CD4-positive, alpha-beta T cell (primary cell): ENCODE measurements at regions of chrX and their contacts with region 1.

Region 1: DNA sequence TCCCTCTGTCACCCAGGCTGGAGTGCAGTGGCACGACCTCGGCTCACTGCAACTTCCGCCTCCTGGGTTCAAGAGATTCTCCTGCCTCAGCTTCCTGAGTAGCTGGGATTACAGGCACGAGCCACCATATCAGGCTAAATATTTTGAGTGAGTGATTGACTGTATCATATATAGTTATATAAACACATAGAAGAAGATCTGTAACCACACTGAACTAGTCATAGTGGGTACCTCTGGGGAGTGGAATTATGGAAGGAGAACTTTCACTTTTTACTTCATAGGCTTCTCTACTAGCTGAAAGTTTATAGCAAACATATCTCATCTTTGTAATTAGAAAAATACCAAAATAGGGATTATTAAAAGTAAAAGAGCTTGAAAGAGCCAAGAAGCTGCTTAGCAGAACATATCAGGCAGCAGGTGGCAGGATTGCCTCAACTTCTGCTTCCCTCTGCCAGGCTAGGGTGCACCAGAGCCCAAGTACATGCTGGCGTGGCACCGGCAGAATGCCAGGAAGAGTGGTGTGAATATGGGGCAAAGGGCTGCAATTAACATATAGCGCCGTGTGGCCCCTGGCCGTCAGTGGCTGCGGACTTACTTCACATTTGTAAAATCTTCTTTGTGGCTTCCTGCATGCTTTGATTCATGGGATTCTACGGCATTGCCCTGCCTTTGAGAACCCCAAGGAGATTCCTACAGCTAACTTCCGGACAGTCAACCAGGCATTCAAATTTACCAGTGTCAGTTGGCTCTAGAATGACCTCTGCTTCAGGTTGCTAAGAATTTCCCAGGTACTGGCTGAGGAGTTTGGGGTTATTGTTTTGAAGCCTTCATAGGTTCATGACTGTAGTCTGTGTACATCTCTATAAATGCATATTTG is 39.4 kb upstream of the CD40LG start:
- DNase-seq: peak; percentile 38 to 86 (median 60)
- ATAC-seq: peak; percentile 92
- H3K4me3 ChIP-seq: peak overlapping the region; percentile 10
- H3K4me3 Mint-ChIP-seq: peak overlapping the region; percentile 73
- H3K27ac ChIP-seq: peak overlapping the region in 1 of 2 donors; percentile 2
- H3K27ac Mint-ChIP-seq: peak overlapping the region; percentile 91
- H3K4me1 ChIP-seq: peaks cover 24% of the 10 kb centered on the region
- H3K4me1 Mint-ChIP-seq: peaks cover 47% of the 10 kb centered on the region
- H3K27me3 ChIP-seq: no peaks in the 10 kb centered on the region
- H3K27me3 Mint-ChIP-seq: no peaks in the 10 kb centered on the region
- CTCF ChIP-seq: peak; percentile 63

Region 2: DNA sequence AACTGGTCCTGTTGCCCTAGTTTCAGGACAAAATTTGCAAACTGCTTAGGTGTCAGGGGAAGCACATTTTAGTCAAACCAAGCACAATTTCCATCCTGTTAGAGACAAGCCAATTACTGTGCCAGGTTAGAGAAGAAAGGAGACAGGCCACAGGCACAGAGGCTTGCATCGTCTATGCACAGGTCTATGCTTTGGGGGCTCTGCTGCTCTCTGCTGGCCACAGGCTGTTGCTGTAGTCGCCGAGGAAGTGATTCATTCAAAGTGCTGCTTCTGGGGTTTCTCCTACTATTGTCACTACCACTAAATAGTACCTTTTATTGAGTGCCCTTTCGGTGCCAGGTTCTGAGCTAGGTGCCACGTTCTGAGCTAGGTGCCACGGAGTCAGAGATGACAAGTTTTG is 31.0 kb before region 1 on chrX:
- CTCF ChIA-PET with region 1: interaction called, 3 read pairs
- POLR2A ChIA-PET with region 1: interaction called, 17 read pairs
- intact Hi-C with region 1: loop called in 1 of 2 experiments (anchors 5 kb)
- DNase-seq: peak; percentile 45 to 85 (median 62)
- ATAC-seq: peak; percentile 100
- H3K4me3 ChIP-seq: no peak overlapping the region
- H3K4me3 Mint-ChIP-seq: no peak overlapping the region
- H3K27ac ChIP-seq: no peak overlapping the region
- H3K27ac Mint-ChIP-seq: peak overlapping the region; percentile 61
- H3K4me1 ChIP-seq: peaks cover 12% of the 10 kb centered on the region
- H3K4me1 Mint-ChIP-seq: peaks cover 13% of the 10 kb centered on the region
- H3K27me3 ChIP-seq: no peaks in the 10 kb centered on the region
- H3K27me3 Mint-ChIP-seq: no peaks in the 10 kb centered on the region
- CTCF ChIP-seq: peak; percentile 63

Region 3: GRCh38 chrX:136646602-136647239 is 38.2 kb after region 1 on chrX:
- CTCF ChIA-PET with region 1: interaction called, 4 read pairs
- POLR2A ChIA-PET with region 1: interaction called, 29 read pairs
- intact Hi-C with region 1: loop called (anchors 2 to 5 kb)
- DNase-seq: peak in 12 of 14 experiments; percentile 14 to 78 (median 44)
- ATAC-seq: peak; percentile 81
- H3K4me3 ChIP-seq: no peak overlapping the region
- H3K4me3 Mint-ChIP-seq: peak overlapping the region; percentile 99
- H3K27ac ChIP-seq: peak overlapping the region; percentile 39 to 45
- H3K27ac Mint-ChIP-seq: peak overlapping the region; percentile 92
- H3K4me1 ChIP-seq: peaks cover 26% of the 10 kb centered on the region
- H3K4me1 Mint-ChIP-seq: peaks cover 54% of the 10 kb centered on the region
- H3K27me3 ChIP-seq: no peaks in the 10 kb centered on the region
- H3K27me3 Mint-ChIP-seq: no peaks in the 10 kb centered on the region
- CTCF ChIP-seq: no peak

Region 4: DNA sequence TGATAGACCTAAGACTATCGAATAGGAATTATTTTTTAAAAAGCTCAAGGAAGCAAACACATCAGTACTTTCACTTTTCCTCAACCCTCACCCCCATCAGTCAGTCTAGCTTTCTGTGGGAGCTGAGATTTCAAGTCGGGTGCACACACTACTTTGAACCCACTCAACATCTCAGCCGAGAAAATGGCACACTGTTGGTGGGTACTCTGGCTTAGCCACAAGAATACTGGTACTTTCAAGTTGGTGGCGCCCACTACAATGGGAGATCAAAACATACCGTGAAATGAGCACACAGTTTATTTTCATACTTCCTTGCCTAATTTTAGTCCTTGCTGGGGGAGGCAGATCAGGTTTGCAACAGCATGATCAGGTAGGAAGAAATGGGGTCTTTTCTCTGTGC is 49.6 kb after region 1 on chrX:
- CTCF ChIA-PET with region 1: no interaction called
- POLR2A ChIA-PET with region 1: interaction called, 32 read pairs
- intact Hi-C with region 1: loop called in 1 of 2 experiments (anchors 5 kb)
- DNase-seq: peak in 5 of 14 experiments; percentile 16 to 50 (median 45)
- ATAC-seq: peak; percentile 10
- H3K4me3 ChIP-seq: peak overlapping the region; percentile 36
- H3K4me3 Mint-ChIP-seq: peak overlapping the region; percentile 99
- H3K27ac ChIP-seq: peak overlapping the region; percentile 74 to 75
- H3K27ac Mint-ChIP-seq: peak overlapping the region; percentile 92
- H3K4me1 ChIP-seq: peaks cover 76% of the 10 kb centered on the region
- H3K4me1 Mint-ChIP-seq: peaks cover 98% of the 10 kb centered on the region
- H3K27me3 ChIP-seq: no peaks in the 10 kb centered on the region
- H3K27me3 Mint-ChIP-seq: no peaks in the 10 kb centered on the region
- CTCF ChIP-seq: no peak

Region 5: GRCh38 chrX:136694431-136695087 is 86.0 kb after region 1 on chrX:
- CTCF ChIA-PET with region 1: interaction called, 18 read pairs
- POLR2A ChIA-PET with region 1: interaction called, 27 read pairs
- intact Hi-C with region 1: loop called (anchors 1 kb)
- DNase-seq: peak in 10 of 14 experiments; percentile 6 to 83 (median 23)
- ATAC-seq: peak; percentile 70
- H3K4me3 ChIP-seq: peak overlapping the region; percentile 33
- H3K4me3 Mint-ChIP-seq: peak overlapping the region; percentile 71
- H3K27ac ChIP-seq: peak overlapping the region; percentile 81 to 87
- H3K27ac Mint-ChIP-seq: peak overlapping the region; percentile 95
- H3K4me1 ChIP-seq: peaks cover 50% of the 10 kb centered on the region
- H3K4me1 Mint-ChIP-seq: peaks cover 79% of the 10 kb centered on the region
- H3K27me3 ChIP-seq: no peaks in the 10 kb centered on the region
- H3K27me3 Mint-ChIP-seq: no peaks in the 10 kb centered on the region
- CTCF ChIP-seq: peak; percentile 66

Region 6: DNA sequence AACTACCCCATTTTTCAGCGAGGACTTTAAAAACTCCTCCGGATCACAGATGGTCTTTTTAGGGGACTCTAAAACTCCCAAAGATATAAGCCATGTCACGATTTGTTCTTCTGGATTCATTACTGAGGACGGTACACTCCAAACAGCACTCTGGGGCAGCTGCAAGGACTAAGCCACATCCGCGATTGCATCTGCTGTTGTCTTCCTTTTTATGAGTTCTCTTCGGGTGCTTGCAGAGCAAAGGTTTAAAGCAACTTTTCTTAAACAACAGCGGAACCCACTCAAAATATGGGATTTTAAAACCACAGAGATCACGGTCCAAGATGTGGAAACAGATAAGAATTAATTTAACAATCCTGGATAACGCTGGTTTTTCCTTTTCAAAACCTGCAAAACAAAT is 172.2 kb after region 1 on chrX and contains the start of gene ARHGEF6:
- CTCF ChIA-PET with region 1: no interaction called
- POLR2A ChIA-PET with region 1: no interaction called
- intact Hi-C with region 1: no loop called
- DNase-seq: peak in 12 of 14 experiments; percentile 9 to 66 (median 38)
- ATAC-seq: peak; percentile 60
- H3K4me3 ChIP-seq: peak within 1 kb of the TSS; percentile 79
- H3K4me3 Mint-ChIP-seq: peak within 1 kb of the TSS; percentile 98
- H3K27ac ChIP-seq: peak within 1 kb of the TSS; percentile 65 to 84
- H3K27ac Mint-ChIP-seq: peak within 1 kb of the TSS; percentile 95
- H3K4me1 ChIP-seq: peaks cover 29% of the 10 kb centered on the region
- H3K4me1 Mint-ChIP-seq: peaks cover 75% of the 10 kb centered on the region
- H3K27me3 ChIP-seq: no peaks in the 10 kb centered on the region
- H3K27me3 Mint-ChIP-seq: no peaks in the 10 kb centered on the region
- CTCF ChIP-seq: no peak
- total RNA-seq, gene ARHGEF6: 43.3 to 45.3 TPM

Region 7: GRCh38 chrX:136920001-136920400 is 311.5 kb after region 1 on chrX:
- CTCF ChIA-PET with region 1: no interaction called
- POLR2A ChIA-PET with region 1: no interaction called
- intact Hi-C with region 1: loop called in 1 of 2 experiments (anchors 1 kb)
- DNase-seq: no peak
- ATAC-seq: no peak
- H3K4me3 ChIP-seq: no peak overlapping the region
- H3K4me3 Mint-ChIP-seq: no peak overlapping the region
- H3K27ac ChIP-seq: no peak overlapping the region
- H3K27ac Mint-ChIP-seq: no peak overlapping the region
- H3K4me1 ChIP-seq: peaks cover 2% of the 10 kb centered on the region
- H3K4me1 Mint-ChIP-seq: peaks cover 3% of the 10 kb centered on the region
- H3K27me3 ChIP-seq: no peaks in the 10 kb centered on the region
- H3K27me3 Mint-ChIP-seq: no peaks in the 10 kb centered on the region
- CTCF ChIP-seq: no peak